ENCODE measurements at regions of chr7 and their contacts with region 1.

Region 1: DNA sequence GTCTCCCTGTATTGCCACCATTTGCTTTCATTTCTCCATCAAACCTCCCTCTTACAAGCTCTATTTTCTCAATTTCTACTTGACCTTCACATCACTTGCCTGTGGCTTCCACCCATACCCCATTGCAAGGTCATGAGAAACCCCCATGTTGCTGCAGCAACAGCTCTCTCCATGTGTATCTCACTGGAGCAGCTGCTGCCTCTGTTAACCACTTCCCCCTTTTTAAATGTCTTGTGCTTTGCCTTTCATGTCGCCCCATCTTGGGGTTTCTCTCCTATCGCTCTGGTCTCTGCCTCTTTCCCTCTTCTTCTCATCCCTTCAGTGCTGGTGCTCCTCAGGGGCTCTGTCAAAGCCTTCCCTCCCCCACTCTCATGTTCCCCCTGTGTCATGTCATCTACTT is 148.8 kb downstream of the CHN2 start:
- DNase-seq: no peak
- H3K4me3 ChIP-seq: no peak overlapping the region
- H3K27ac ChIP-seq: no peak overlapping the region
- H3K4me1 ChIP-seq: no peaks in the 10 kb centered on the region
- H3K27me3 ChIP-seq: no peaks in the 10 kb centered on the region
- CTCF ChIP-seq: no peak

Region 2: DNA sequence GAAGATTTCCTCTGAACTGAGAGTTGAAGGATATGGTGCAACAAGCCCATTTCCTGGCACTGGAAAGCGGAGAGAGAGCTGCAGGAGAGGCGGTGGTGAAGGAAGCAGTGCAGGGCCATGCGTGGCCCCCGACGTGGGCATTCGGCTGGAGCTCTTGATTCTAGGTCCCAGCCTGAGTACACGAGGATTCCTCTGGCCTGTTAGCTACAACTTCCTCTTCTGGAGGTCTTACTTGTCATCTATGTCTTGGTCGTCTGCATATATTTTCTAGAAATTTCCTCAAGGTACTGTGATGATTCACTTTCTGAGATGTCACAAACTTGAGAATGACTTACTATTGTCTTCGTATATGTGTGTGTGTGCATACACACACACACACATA is 1103.6 kb before region 1 on chr7:
- intact Hi-C with region 1: no loop called
- DNase-seq: no peak
- H3K4me3 ChIP-seq: no peak overlapping the region
- H3K27ac ChIP-seq: no peak overlapping the region
- H3K4me1 ChIP-seq: no peaks in the 10 kb centered on the region
- H3K27me3 ChIP-seq: no peaks in the 10 kb centered on the region
- CTCF ChIP-seq: no peak

Region 3: DNA sequence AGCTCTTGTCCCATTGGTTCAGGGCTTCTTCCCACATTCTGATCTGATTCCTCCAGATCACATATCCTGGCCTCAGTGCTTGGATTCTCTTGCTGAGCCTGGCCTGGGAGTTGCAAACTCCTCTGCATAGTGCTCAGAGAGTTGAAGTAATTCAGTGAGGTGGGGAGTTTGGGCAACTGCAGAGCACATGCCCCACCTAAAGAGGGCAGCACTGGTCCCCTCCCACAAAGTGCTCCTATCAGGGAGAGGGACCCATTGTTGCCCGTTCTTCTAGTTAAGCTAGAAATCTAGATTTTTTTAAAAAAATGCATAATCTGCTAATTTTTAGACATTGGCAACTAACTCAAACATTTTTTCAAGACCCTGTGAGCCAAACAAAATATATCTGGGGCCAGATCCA is 103.8 kb before region 1 on chr7:
- intact Hi-C with region 1: loop called (anchors 5 kb)
- DNase-seq: no peak
- H3K4me3 ChIP-seq: no peak overlapping the region
- H3K27ac ChIP-seq: no peak overlapping the region
- H3K4me1 ChIP-seq: no peaks in the 10 kb centered on the region
- H3K27me3 ChIP-seq: no peaks in the 10 kb centered on the region
- CTCF ChIP-seq: peak; percentile 68